IMR-90 (cell line): ENCODE measurements at regions of chr7 and their contacts with region 1.

Region 1: GRCh38 chr7:98133181-98133580 is 26.5 kb downstream of the LMTK2 start:
- DNase-seq: no peak
- ATAC-seq: no peak
- H3K4me3 ChIP-seq: no peak overlapping the region
- H3K27ac ChIP-seq: no peak overlapping the region
- H3K4me1 ChIP-seq: peaks cover 5% of the 10 kb centered on the region; the same call in 1 of the 2 replicates
- H3K27me3 ChIP-seq: no peaks in the 10 kb centered on the region
- CTCF ChIP-seq: no peak
- POLR2A ChIP-seq: no peak
- RAD21 ChIP-seq: no peak

Region 2: DNA sequence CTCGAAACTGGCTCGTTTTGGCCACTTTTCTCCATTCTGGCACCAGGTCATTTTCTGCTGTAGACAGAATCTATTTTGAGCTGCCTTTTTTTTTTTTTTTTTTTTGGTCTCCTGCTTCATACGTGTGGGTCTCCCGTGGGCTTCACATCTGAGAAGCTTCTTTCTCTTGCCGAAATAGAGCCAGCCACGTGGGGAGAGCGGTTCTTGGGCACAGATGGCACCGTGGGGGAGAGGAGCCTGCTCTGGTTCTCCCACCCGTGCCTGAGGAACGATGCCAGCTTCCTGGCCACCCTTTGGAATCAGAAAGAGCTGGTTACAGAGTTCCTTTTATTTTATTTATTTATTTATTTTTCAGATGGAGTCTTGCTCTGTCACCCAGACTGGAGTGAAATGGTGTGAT is 94.5 kb before region 1 on chr7:
- CTCF ChIA-PET with region 1: no interaction called
- POLR2A ChIA-PET with region 1: interaction called, 21 read pairs
- dilution Hi-C with region 1: no loop called
- in situ Hi-C with region 1: no loop called
- intact Hi-C with region 1: no loop called
- DNase-seq: no peak
- ATAC-seq: no peak
- H3K4me3 ChIP-seq: no peak overlapping the region
- H3K27ac ChIP-seq: no peak overlapping the region
- H3K4me1 ChIP-seq: no peaks in the 10 kb centered on the region
- H3K27me3 ChIP-seq: peaks cover 1% of the 10 kb centered on the region; the same call in 1 of the 2 replicates
- CTCF ChIP-seq: no peak
- POLR2A ChIP-seq: no peak
- RAD21 ChIP-seq: no peak